ENCODE measurements at regions of chr4 and their contacts with region 1.

Region 1: DNA sequence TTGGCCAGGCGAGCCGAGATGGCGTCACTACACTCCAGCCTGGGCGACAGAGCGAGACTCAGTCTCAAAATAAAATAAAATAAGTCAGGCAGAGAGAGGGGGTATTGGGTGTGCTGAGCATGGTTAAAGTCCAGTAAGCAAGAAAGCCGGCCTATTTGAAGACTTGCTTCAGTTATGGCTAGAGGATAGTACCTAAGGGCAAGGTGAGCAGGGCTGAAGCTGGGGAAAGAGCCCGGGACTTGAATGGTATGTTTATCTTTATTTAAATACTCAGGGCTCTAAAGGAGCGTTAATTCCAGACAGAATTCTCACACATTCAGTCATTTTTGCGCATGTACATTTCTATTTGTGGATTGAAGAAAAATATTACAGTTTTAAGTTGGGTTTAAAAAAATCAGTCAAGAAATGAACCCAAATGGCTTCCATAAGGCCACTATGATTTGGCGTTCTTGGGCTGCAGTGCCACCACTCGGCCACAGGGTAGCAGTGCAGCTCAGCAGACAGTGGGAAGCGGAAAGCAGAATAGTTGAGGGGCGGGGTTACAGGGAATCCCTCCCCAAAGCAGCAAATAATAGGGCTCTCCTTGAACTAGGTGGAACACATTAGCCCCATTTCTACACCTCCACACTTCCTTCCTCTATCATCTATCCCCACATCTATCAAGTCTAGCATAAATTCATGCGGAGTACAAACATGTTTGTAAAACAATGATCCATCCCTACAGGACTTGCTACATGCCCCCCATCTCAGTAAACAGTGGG is 37.2 kb upstream of the SH3D19 start:
- DNase-seq: peak; percentile 54 to 82 (median 72)
- ATAC-seq: peak; percentile 100
- H3K4me3 ChIP-seq: no peak overlapping the region
- H3K4me3 Mint-ChIP-seq: no peak overlapping the region
- H3K27ac ChIP-seq: no peak overlapping the region
- H3K27ac Mint-ChIP-seq: no peak overlapping the region
- H3K4me1 ChIP-seq: no peaks in the 10 kb centered on the region
- H3K4me1 Mint-ChIP-seq: peaks cover 0 to 5% (median 3%) of the 10 kb centered on the region in 7 donors
- H3K27me3 ChIP-seq: no peaks in the 10 kb centered on the region
- H3K27me3 Mint-ChIP-seq: peaks cover 0 to 21% (median 15%) of the 10 kb centered on the region in 5 donors

Region 2: GRCh38 chr4:151117371-151117962 is 245.1 kb before region 1 on chr4:
- CTCF ChIA-PET with region 1: no interaction called
- POLR2A ChIA-PET with region 1: no interaction called
- intact Hi-C with region 1: loop called (anchors 1 to 2 kb)
- DNase-seq: peak in 8 of 9 donors; percentile 22 to 63 (median 54)
- ATAC-seq: peak; percentile 86
- H3K4me3 ChIP-seq: no peak overlapping the region
- H3K4me3 Mint-ChIP-seq: no peak overlapping the region
- H3K27ac ChIP-seq: no peak overlapping the region
- H3K27ac Mint-ChIP-seq: peak overlapping the region in 1 of 9 donors; percentile 59
- H3K4me1 ChIP-seq: no peaks in the 10 kb centered on the region
- H3K4me1 Mint-ChIP-seq: peaks cover 0 to 8% (median 6%) of the 10 kb centered on the region in 7 donors
- H3K27me3 ChIP-seq: no peaks in the 10 kb centered on the region
- H3K27me3 Mint-ChIP-seq: no peaks in the 10 kb centered on the region

Region 3: DNA sequence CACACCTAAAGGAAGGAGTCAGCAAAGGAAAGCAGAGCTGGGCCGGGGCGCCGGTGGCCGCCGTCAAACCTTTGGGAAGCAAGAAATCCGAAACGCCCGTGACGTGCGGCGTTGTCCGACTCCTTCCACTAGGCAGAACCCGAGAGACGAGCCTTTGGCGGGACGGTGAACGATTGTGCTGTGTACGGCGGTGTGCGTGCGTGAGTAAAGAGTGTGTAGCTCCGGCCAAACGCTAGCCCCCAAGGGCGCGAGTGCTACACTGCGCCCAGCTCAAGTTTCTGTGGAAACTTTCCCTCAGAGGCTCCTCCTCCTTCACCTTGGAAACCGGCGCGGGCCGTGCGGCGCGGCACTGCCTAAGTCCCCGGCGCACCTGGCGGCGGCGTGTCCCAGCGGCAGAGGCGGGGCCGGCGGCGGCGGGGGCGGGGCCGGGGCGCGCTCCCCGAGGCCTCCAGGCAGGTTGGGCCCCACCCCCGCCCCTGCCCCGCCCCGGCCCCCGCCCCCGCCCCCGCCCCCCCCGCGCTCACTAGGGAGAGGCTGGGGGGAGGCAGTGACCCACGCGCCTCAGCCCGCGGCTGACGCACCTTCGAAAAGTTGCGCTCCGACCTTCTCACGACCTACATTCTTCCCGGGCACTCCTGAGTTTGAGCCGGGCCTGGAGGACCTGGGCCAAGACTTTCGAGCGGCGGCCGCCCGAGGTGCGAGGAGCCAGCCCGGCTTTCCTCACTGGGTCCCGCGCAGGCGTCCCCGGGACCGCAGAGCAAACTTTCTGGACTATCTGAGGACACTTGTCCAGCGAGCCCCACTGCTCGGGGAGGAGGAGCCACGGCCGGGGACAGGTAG is 46.3 kb after region 1 on chr4 and contains the start of gene FHIP1A:
- CTCF ChIA-PET with region 1: no interaction called
- POLR2A ChIA-PET with region 1: no interaction called
- intact Hi-C with region 1: loop called in 1 of 2 experiments (anchors 2 kb)
- DNase-seq: peak; percentile 67 to 89 (median 87)
- ATAC-seq: peak; percentile 96
- H3K4me3 ChIP-seq: peak within 1 kb of the TSS; percentile 63
- H3K4me3 Mint-ChIP-seq: peak within 1 kb of the TSS; percentile 86 to 97 (median 94)
- H3K27ac ChIP-seq: peak within 1 kb of the TSS; percentile 53
- H3K27ac Mint-ChIP-seq: peak within 1 kb of the TSS; percentile 21 to 92 (median 85)
- H3K4me1 ChIP-seq: peaks cover 0 to 6% of the 10 kb centered on the region in 2 donors
- H3K4me1 Mint-ChIP-seq: peaks cover 15 to 26% (median 23%) of the 10 kb centered on the region in 7 donors
- H3K27me3 ChIP-seq: no peaks in the 10 kb centered on the region
- H3K27me3 Mint-ChIP-seq: peaks cover 0 to 56% (median 8%) of the 10 kb centered on the region in 5 donors
- total RNA-seq, gene FHIP1A: 0.05 to 2.7 (median 1.9) TPM

Region 4: DNA sequence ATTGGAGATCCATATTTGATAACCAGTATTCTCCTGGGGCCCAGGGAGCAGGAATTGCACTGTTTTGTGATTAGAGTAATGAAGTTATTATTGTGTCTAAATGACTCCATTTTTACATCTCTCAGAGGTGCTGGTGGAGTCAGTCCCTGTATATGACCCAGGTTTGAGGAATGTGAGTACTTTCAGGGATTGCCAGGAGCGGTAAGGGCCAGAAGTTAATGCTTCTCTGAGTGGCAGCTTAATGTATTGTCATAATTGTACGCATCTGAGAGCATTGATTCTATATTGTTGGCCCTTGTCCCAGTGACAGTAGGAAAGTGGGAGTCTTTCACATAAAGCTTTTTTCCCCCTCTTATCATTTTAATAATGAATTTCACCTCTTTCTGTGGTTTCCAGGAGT is 252.0 kb after region 1 on chr4:
- CTCF ChIA-PET with region 1: no interaction called
- POLR2A ChIA-PET with region 1: no interaction called
- intact Hi-C with region 1: loop called in 1 of 2 experiments (anchors 5 kb)
- DNase-seq: no peak
- ATAC-seq: no peak
- H3K4me3 ChIP-seq: no peak overlapping the region
- H3K4me3 Mint-ChIP-seq: no peak overlapping the region
- H3K27ac ChIP-seq: no peak overlapping the region
- H3K27ac Mint-ChIP-seq: no peak overlapping the region
- H3K4me1 ChIP-seq: no peaks in the 10 kb centered on the region
- H3K4me1 Mint-ChIP-seq: no peaks in the 10 kb centered on the region
- H3K27me3 ChIP-seq: no peaks in the 10 kb centered on the region
- H3K27me3 Mint-ChIP-seq: peaks cover 4 to 19% (median 5%) of the 10 kb centered on the region in 5 donors

Region 5: GRCh38 chr4:152369902-152370295 is 1007.3 kb after region 1 on chr4:
- CTCF ChIA-PET with region 1: interaction called, 3 read pairs
- POLR2A ChIA-PET with region 1: no interaction called
- intact Hi-C with region 1: loop called in 1 of 2 experiments (anchors 1 kb)
- DNase-seq: peak in 3 of 9 donors; percentile 12 to 28 (median 13)
- ATAC-seq: no peak
- H3K4me3 ChIP-seq: no peak overlapping the region
- H3K4me3 Mint-ChIP-seq: no peak overlapping the region
- H3K27ac ChIP-seq: no peak overlapping the region
- H3K27ac Mint-ChIP-seq: peak overlapping the region in 1 of 9 donors; percentile 7
- H3K4me1 ChIP-seq: no peaks in the 10 kb centered on the region
- H3K4me1 Mint-ChIP-seq: peaks cover 5 to 20% (median 9%) of the 10 kb centered on the region in 7 donors
- H3K27me3 ChIP-seq: no peaks in the 10 kb centered on the region
- H3K27me3 Mint-ChIP-seq: no peaks in the 10 kb centered on the region

Region 6: GRCh38 chr4:152401424-152401823 is 1038.8 kb after region 1 on chr4:
- CTCF ChIA-PET with region 1: no interaction called
- POLR2A ChIA-PET with region 1: no interaction called
- intact Hi-C with region 1: loop called in 1 of 2 experiments (anchors 5 kb)
- DNase-seq: no peak
- ATAC-seq: no peak
- H3K4me3 ChIP-seq: no peak overlapping the region
- H3K4me3 Mint-ChIP-seq: no peak overlapping the region
- H3K27ac ChIP-seq: no peak overlapping the region
- H3K27ac Mint-ChIP-seq: no peak overlapping the region
- H3K4me1 ChIP-seq: peaks cover 7 to 11% of the 10 kb centered on the region in 2 donors
- H3K4me1 Mint-ChIP-seq: peaks cover 18 to 36% (median 30%) of the 10 kb centered on the region in 7 donors
- H3K27me3 ChIP-seq: no peaks in the 10 kb centered on the region
- H3K27me3 Mint-ChIP-seq: no peaks in the 10 kb centered on the region

Region 7: GRCh38 chr4:152640058-152640833 is 1277.7 kb after region 1 on chr4:
- CTCF ChIA-PET with region 1: interaction called, 3 read pairs
- POLR2A ChIA-PET with region 1: no interaction called
- intact Hi-C with region 1: loop called in 1 of 2 experiments (anchors 5 kb)
- DNase-seq: peak in 6 of 9 donors; percentile 14 to 51 (median 34)
- ATAC-seq: no peak
- H3K4me3 ChIP-seq: no peak overlapping the region
- H3K4me3 Mint-ChIP-seq: no peak overlapping the region
- H3K27ac ChIP-seq: no peak overlapping the region
- H3K27ac Mint-ChIP-seq: peak overlapping the region in 3 of 9 donors; percentile 2 to 63 (median 20)
- H3K4me1 ChIP-seq: peaks cover 0 to 15% of the 10 kb centered on the region in 2 donors
- H3K4me1 Mint-ChIP-seq: peaks cover 0 to 31% (median 9%) of the 10 kb centered on the region in 7 donors
- H3K27me3 ChIP-seq: no peaks in the 10 kb centered on the region
- H3K27me3 Mint-ChIP-seq: no peaks in the 10 kb centered on the region